Prostate gland (tissue), 2 donors: ENCODE measurements at regions of chr6 and their contacts with region 1.

Region 1: GRCh38 chr6:46848684-46849360 is 55.6 kb downstream of the MEP1A start:
- DNase-seq: peak; percentile 81
- H3K4me3 ChIP-seq: no peak overlapping the region
- H3K27ac ChIP-seq: no peak overlapping the region
- H3K4me1 ChIP-seq: no peaks in the 10 kb centered on the region
- H3K27me3 ChIP-seq: no peaks in the 10 kb centered on the region
- CTCF ChIP-seq: peak; percentile 85 to 98 (median 96)
- POLR2A ChIP-seq: no peak

Region 2: DNA sequence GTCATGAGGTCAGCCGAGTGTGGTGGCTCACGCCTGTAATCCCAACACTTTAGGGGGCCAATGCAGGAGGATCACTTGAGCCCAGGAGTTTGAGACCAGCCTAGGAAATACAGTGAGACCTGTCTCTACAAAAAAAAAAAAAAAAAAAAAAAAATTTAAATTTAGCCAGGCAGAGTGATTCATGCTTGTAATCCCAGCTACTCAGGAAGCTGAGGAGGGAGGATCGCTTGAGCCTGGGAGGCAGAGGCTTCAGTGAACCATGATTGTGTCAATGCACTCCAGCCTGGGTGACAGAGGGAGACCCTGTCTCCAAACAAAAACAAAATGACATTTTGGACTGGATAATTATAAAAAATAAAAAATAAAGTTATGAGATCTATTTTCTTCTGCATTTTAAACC is 137.1 kb after region 1 on chr6:
- intact Hi-C with region 1: loop called (anchors 2 kb)
- DNase-seq: no peak
- H3K4me3 ChIP-seq: no peak overlapping the region
- H3K27ac ChIP-seq: no peak overlapping the region
- H3K4me1 ChIP-seq: peaks cover 8% of the 10 kb centered on the region
- H3K27me3 ChIP-seq: no peaks in the 10 kb centered on the region
- CTCF ChIP-seq: no peak
- POLR2A ChIP-seq: no peak

Region 3: GRCh38 chr6:47047479-47048407 is 198.9 kb after region 1 on chr6:
- intact Hi-C with region 1: loop called (anchors 2 kb)
- DNase-seq: peak; percentile 66
- H3K4me3 ChIP-seq: no peak overlapping the region
- H3K27ac ChIP-seq: no peak overlapping the region
- H3K4me1 ChIP-seq: peaks cover under 1% of the 10 kb centered on the region
- H3K27me3 ChIP-seq: no peaks in the 10 kb centered on the region
- CTCF ChIP-seq: peak; percentile 26 to 90 (median 86)
- POLR2A ChIP-seq: no peak